ENCODE measurements at regions of chr6 and their contacts with region 1.

Region 1: DNA sequence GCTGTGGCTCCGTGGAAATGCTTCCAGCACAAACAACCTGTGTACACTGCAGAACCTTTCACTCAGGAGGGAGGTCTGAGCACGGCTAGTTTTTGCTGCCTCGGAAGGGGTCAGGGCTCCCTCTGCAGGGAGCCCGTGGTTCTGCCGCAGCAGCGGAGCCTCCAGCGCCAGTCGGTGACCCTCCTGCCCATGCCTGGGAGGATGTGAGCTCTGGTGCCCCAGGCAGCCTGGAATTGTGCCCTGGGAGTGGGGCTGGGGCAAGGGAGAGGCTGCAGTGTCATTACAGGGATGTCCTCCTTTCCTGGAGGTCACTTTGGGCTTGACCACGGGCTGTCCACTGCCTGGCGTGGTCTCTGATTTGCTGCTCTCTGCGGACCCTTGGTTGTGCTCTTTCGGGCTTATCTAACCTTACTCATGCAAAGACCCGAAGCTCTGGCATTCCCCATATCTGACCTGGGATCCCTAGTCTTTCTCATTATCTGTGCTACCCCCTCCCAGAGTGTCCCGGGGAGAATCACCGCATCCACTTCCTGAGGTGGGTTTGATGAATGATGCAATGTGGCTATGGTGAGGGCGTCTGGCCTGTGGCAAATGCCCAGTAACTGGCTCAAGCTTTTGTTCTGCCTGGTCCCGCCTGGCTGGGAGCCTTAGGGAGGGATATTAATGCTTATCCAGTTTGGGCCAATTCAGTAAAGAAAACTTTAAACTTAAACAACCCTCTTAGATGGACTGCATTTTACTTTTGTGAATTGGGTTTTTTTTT is 59.6 kb upstream of the TAGAP start:
- DNase-seq: peak; percentile 59 to 88 (median 74)
- ATAC-seq: peak; percentile 53 to 68 (median 66)
- H3K4me3 ChIP-seq: no peak overlapping the region
- H3K4me3 Mint-ChIP-seq: peak overlapping the region in 2 of 3 donors; percentile 44 to 70
- H3K27ac ChIP-seq: peak overlapping the region; percentile 53
- H3K27ac Mint-ChIP-seq: peak overlapping the region; percentile 86 to 95
- H3K4me1 ChIP-seq: peaks cover 53 to 75% of the 10 kb centered on the region in 2 experiments
- H3K4me1 Mint-ChIP-seq: peaks cover 76 to 91% (median 81%) of the 10 kb centered on the region in 3 donors
- H3K27me3 ChIP-seq: no peaks in the 10 kb centered on the region
- H3K27me3 Mint-ChIP-seq: no peaks in the 10 kb centered on the region

Region 2: DNA sequence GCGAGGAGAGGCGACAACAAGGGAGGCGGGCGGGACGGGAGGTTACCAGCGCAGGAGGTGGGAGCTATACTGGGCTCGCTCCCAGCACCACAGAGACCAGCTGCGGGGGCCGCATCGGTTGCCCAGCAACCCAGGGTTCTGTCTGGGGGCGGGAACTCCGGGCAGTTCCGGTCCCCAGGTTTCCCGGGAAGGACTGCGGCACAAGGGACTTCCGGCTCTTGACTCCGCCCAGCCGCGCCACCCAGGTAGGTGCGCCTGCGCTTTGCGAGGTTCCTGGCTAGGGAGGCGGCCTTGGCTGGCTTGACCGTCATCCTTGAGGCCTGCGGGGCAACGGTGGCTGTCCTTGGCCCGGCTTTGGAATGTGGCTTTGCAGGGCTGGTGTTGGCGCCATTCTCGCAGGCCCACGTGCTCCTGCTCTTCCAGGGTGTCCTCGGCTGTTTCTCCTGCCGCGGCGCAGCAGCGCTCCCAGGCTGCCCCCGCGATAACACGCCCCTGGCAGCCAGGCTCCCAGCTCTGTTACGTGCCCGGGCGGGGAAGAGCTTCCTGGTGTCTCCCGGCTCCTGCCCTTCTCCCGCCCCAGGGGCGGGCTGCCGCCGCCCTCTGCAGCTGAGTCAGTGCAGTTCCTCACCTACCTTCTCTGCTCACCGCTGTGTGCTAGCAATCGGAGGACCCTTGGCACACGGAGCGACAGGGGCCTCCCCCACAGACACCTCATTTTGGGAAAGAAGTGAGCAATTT is 104.5 kb before region 1 on chr6 and contains the start of gene RSPH3:
- CTCF ChIA-PET with region 1: interaction called, 5 to 6 read pairs
- POLR2A ChIA-PET with region 1: interaction called in 1 of 2 experiments, 17 read pairs
- DNase-seq: peak; percentile 64 to 90 (median 77)
- ATAC-seq: peak; percentile 89 to 93 (median 89)
- H3K4me3 ChIP-seq: peak within 1 kb of the TSS; percentile 93
- H3K4me3 Mint-ChIP-seq: peak within 1 kb of the TSS; percentile 95 to 98 (median 98)
- H3K27ac ChIP-seq: peak within 1 kb of the TSS; percentile 66
- H3K27ac Mint-ChIP-seq: peak within 1 kb of the TSS; percentile 89 to 91
- H3K4me1 ChIP-seq: peaks cover 13 to 16% of the 10 kb centered on the region in 2 experiments
- H3K4me1 Mint-ChIP-seq: peaks cover 27 to 38% (median 31%) of the 10 kb centered on the region in 3 donors
- H3K27me3 ChIP-seq: no peaks in the 10 kb centered on the region
- H3K27me3 Mint-ChIP-seq: no peaks in the 10 kb centered on the region
- total RNA-seq, gene RSPH3: 1.5 to 2.6 (median 2.1) TPM

Region 3: DNA sequence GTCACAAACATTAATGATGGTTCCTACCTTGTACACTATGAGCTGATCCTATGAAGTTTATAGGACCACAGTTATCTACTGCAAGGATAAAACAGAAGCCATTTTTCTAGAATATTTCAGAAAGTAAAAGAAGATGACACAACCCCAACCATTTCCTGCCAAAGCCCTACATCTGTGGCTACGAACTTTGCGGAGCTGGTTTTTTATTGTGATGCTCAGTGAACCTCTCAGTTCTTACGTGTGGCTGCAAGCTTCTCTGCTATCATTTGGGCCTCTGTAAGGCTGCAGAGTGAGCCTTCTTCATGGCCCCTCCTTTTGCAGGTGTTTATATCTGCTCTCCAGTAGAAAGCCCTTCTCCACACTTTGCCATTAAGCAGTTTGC is 41.8 kb before region 1 on chr6:
- CTCF ChIA-PET with region 1: interaction called, 5 to 21 read pairs
- POLR2A ChIA-PET with region 1: interaction called in 1 of 2 experiments, 4 read pairs
- DNase-seq: peak; percentile 34 to 86 (median 67)
- ATAC-seq: peak; percentile 93 to 94 (median 94)
- H3K4me3 ChIP-seq: no peak overlapping the region
- H3K4me3 Mint-ChIP-seq: peak overlapping the region; percentile 52 to 77 (median 55)
- H3K27ac ChIP-seq: peak overlapping the region; percentile 94
- H3K27ac Mint-ChIP-seq: peak overlapping the region; percentile 98 to 99
- H3K4me1 ChIP-seq: peaks cover 36 to 74% of the 10 kb centered on the region in 2 experiments
- H3K4me1 Mint-ChIP-seq: peaks cover 92 to 97% (median 96%) of the 10 kb centered on the region in 3 donors
- H3K27me3 ChIP-seq: no peaks in the 10 kb centered on the region
- H3K27me3 Mint-ChIP-seq: no peaks in the 10 kb centered on the region

Region 4: DNA sequence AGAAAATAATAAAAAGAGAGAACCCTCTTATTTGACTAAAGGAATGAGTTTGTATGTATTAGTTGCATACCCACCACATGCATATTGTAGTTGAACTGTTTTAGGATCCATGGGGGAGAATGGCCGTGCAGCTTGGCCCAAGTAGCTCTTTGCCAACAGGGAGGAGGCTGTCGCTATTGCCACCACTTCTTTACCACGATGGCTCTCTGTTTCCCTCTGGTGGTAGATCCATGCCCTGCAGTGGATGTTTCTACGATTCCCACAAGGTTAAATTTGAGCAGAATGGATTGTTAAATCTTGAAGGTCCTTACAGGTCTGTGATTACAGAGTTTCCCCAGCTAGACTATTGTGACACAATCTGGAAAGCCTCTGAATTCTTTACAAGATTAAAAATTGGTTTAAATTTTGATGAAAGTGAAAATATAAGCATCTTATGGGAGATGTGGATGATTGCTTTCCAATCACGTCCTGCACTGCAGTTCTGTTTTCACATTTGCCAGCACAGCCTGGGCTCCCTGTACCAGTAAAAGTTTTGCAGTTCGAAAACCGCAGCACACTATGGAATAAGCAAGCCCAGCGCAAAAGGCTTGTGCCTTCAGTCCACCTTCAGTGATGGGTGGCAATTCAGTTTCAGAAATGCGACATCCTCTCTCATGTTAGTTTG is 30.5 kb after region 1 on chr6:
- CTCF ChIA-PET with region 1: interaction called, 9 to 24 read pairs
- POLR2A ChIA-PET with region 1: no interaction called
- DNase-seq: peak; percentile 39 to 88 (median 68)
- ATAC-seq: peak; percentile 85 to 92 (median 88)
- H3K4me3 ChIP-seq: no peak overlapping the region
- H3K4me3 Mint-ChIP-seq: no peak overlapping the region
- H3K27ac ChIP-seq: no peak overlapping the region
- H3K27ac Mint-ChIP-seq: no peak overlapping the region
- H3K4me1 ChIP-seq: no peaks in the 10 kb centered on the region
- H3K4me1 Mint-ChIP-seq: peaks cover 6 to 7% (median 6%) of the 10 kb centered on the region in 3 donors
- H3K27me3 ChIP-seq: peaks cover 0 to 16% of the 10 kb centered on the region in 2 experiments
- H3K27me3 Mint-ChIP-seq: peaks cover 0 to 6% of the 10 kb centered on the region in 2 donors

Measured in T-cell (primary cell).